ENCODE measurements at regions of chr1 and their contacts with region 1.

Region 1: GRCh38 chr1:39189592-39190041 is 14.9 kb upstream of the MACF1 start:
- DNase-seq: no peak
- ATAC-seq: no peak
- H3K4me3 ChIP-seq: no peak overlapping the region
- H3K4me3 Mint-ChIP-seq: no peak overlapping the region
- H3K27ac ChIP-seq: no peak overlapping the region
- H3K27ac Mint-ChIP-seq: peak overlapping the region; percentile 5 to 72
- H3K4me1 ChIP-seq: peaks cover 30% of the 10 kb centered on the region
- H3K4me1 Mint-ChIP-seq: peaks cover 24 to 31% of the 10 kb centered on the region in 2 donors
- H3K27me3 ChIP-seq: no peaks in the 10 kb centered on the region
- H3K27me3 Mint-ChIP-seq: no peaks in the 10 kb centered on the region
- CTCF ChIP-seq: no peak

Region 2: DNA sequence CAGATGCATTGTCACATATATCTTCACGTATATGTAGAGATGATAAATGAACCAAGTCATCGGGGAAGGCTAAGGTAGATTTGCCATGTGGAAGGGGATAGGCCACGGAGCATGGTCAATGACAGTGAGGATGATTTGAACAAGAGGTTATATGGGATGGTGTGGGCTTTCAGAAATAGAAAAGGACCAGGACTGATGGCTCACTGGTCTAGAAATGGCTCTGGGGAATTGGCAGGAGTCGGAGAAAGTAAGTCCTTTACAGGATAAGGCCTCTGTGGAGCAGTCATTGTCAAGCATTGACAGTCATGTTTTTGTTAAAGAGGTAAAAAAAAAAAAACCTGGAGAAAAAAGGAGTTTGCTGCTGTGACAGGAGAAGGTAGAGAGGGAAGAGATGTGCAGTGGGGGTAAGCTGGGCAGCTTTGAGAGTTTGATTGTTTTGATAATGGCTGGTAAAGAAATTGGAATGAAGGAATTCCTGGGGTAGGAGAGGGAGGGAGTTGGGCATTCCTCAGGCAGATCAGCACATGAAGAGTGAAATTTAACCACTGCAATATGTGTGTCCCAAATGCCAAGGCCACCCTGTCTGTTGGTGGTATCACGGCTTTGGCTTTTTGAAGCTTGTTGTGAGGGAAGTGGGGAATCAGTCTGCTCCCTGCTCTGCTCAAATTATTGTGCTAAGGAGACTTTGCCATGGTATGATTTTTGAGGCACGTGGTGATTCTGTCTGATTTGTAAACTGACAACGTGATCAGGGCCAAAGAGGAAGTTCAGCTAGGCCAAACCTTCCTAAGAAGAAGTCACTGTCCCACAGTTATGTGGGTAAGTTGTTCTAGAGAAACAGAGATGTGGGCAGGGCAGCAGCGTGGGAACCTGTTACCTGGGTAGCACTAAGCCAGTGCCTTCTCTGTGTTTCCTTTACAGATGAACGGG is 40.9 kb after region 1 on chr1:
- intact Hi-C with region 1: loop called (anchors 5 kb)
- DNase-seq: peak in 1 of 2 donors; percentile 40
- ATAC-seq: peak; percentile 70 to 87 (median 74)
- H3K4me3 ChIP-seq: no peak overlapping the region
- H3K4me3 Mint-ChIP-seq: peak overlapping the region; percentile 21
- H3K27ac ChIP-seq: peak overlapping the region; percentile 26
- H3K27ac Mint-ChIP-seq: peak overlapping the region; percentile 77 to 88
- H3K4me1 ChIP-seq: peaks cover 26% of the 10 kb centered on the region
- H3K4me1 Mint-ChIP-seq: peaks cover 51 to 58% of the 10 kb centered on the region in 2 donors
- H3K27me3 ChIP-seq: no peaks in the 10 kb centered on the region
- H3K27me3 Mint-ChIP-seq: no peaks in the 10 kb centered on the region
- CTCF ChIP-seq: no peak